CD14-positive monocyte (primary cell): ENCODE measurements at regions of chr9 and their contacts with region 1.

Region 1: DNA sequence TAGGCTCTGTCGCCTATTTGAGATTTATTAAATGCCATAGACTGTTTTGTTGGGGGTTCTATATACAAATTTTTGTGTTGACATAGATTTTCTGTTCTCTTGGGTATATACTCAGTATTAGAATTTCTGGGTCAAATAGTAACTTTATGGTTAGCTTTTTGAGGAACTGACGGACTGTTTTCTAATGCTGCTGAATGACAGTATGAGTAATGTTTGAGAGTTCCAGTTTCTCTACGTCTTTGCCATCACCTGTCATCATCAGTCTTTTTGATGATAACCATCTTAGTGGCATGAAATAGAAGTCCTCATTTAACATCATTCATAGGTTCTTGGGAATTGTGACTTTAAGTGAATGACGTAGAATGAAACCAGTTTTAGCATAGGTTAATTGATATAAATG is 60.1 kb downstream of the CCDC171 start:
- DNase-seq: no peak
- H3K4me3 ChIP-seq: no peak overlapping the region
- H3K4me3 Mint-ChIP-seq: no peak overlapping the region
- H3K27ac ChIP-seq: no peak overlapping the region
- H3K27ac Mint-ChIP-seq: no peak overlapping the region
- H3K4me1 ChIP-seq: no peaks in the 10 kb centered on the region
- H3K4me1 Mint-ChIP-seq: no peaks in the 10 kb centered on the region
- H3K27me3 ChIP-seq: no peaks in the 10 kb centered on the region
- H3K27me3 Mint-ChIP-seq: no peaks in the 10 kb centered on the region
- CTCF ChIP-seq: no peak

Region 2: DNA sequence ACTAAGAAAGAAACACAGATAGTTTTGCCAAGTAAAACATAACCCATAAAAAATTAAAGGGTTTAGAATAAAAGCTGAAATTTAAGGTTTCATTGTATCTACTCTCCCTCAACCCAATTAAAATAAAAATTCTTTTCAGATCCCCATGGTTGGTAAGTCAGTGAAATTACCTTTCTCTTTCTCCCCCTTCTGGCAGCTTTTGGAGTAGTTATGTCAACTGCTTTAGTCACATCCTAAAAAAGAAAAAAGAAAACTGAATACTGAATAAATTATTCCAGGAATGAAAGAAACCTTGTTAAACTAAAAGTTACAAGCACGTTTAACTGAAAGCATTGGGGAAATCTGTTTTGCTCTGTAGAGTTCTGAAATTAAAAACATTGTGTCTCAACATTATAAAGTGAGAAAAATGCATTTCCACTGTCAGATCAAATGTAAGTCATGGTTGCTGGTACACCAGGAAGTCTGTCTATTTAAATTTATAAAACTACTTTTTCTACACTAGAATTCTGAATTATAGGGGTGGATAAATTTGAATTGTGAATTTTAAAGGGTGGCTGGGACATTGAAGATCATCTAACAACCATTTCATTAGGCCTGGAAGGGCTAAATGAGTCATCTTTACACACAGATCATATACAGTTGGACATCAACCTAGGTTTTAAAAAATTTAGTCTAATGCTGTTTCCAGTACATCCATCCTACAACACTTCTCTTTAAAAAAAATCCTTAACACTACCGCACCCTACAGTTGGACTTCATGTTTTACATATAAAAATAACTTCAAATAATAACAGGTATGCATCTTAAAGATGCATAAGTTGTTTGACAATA is 126.9 kb before region 1 on chr9:
- intact Hi-C with region 1: loop called in 1 of 2 experiments (anchors 10 kb)
- DNase-seq: no peak
- H3K4me3 ChIP-seq: no peak overlapping the region
- H3K4me3 Mint-ChIP-seq: no peak overlapping the region
- H3K27ac ChIP-seq: peak overlapping the region in 1 of 2 donors; percentile 18
- H3K27ac Mint-ChIP-seq: peak overlapping the region in 2 of 7 donors; percentile 12 to 23
- H3K4me1 ChIP-seq: no peaks in the 10 kb centered on the region
- H3K4me1 Mint-ChIP-seq: no peaks in the 10 kb centered on the region
- H3K27me3 ChIP-seq: no peaks in the 10 kb centered on the region
- H3K27me3 Mint-ChIP-seq: no peaks in the 10 kb centered on the region
- CTCF ChIP-seq: peak; percentile 58

Region 3: DNA sequence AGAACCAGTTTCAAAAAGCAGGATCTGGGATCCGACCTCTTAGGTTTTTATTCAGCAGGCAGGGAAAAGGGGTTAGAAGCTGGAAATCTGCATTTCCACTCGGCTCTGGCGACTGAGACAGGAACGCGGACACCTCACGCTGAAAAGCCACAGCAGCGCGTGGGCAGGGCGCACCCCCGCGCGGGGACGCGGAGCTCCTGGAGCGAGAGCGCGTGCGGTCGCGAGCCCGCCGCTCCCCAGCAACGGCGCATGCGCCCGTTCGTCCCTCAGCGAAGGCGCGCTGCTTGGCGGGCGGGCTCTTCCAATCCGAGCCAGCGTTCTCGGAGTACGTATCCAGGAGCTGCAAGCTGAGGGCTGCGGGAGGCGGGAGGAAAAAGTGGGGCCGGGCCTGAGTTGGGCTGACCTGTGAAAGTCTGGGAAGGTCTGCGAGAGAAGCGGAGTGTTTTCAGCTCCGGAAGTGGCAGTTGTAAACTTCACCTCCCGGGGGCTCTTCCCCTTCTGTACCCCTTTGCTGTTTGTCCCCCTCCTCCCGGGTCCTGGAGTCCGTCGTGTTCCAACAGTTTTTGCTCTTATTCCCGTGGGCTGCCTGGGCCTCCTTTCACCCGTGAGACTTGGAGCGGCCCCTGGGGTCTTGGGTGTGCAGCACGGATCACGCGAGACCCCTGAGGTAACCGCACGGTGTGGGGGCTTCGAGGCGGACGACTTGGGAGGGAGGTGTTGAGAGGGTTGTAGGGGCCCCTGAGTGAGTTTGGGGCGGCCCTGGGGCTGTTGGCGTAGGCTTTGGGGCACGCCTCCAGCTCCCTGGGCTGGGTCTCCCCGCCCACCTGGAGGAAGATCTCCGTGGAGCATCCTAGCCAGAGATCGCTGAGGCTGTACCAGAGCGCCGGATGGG is 60.1 kb before region 1 on chr9 and contains the start of gene CCDC171:
- intact Hi-C with region 1: loop called in 1 of 2 experiments (anchors 10 kb)
- DNase-seq: peak; percentile 85 to 88 (median 85)
- H3K4me3 ChIP-seq: peak within 1 kb of the TSS; percentile 68 to 87 (median 71)
- H3K4me3 Mint-ChIP-seq: peak within 1 kb of the TSS; percentile 92 to 95
- H3K27ac ChIP-seq: peak within 1 kb of the TSS in 1 of 2 donors; percentile 56
- H3K27ac Mint-ChIP-seq: peak within 1 kb of the TSS in 5 of 7 donors; percentile 53 to 88 (median 62)
- H3K4me1 ChIP-seq: peaks cover 18 to 25% of the 10 kb centered on the region in 2 donors
- H3K4me1 Mint-ChIP-seq: peaks cover 23% of the 10 kb centered on the region
- H3K27me3 ChIP-seq: peaks cover 0 to 4% of the 10 kb centered on the region in 2 donors
- H3K27me3 Mint-ChIP-seq: peaks cover 1 to 13% (median 10%) of the 10 kb centered on the region in 3 donors
- CTCF ChIP-seq: no peak
- polyA plus RNA-seq, gene CCDC171: 0.08 to 0.17 (median 0.10) TPM

Region 4: DNA sequence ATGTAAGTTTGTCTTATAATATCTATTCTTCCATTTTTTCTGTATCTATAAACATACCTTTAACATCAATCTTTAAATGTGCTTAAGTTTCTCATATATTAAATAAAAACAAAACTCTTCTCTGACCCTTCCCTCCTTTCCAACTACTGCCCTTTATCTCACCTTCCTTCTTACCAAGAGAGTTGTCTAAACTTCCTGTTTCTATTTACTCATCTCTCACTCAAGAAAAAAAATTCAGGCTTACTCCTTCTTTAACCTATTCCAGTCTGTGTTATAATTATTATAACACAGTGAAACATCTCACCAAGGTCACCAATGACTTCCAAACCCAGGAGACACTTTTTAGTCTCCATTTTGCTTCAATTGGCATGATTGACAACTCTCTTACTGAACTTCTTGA is 80.7 kb after region 1 on chr9:
- intact Hi-C with region 1: no loop called
- DNase-seq: no peak
- H3K4me3 ChIP-seq: no peak overlapping the region
- H3K4me3 Mint-ChIP-seq: no peak overlapping the region
- H3K27ac ChIP-seq: no peak overlapping the region
- H3K27ac Mint-ChIP-seq: no peak overlapping the region
- H3K4me1 ChIP-seq: no peaks in the 10 kb centered on the region
- H3K4me1 Mint-ChIP-seq: peaks cover 1% of the 10 kb centered on the region
- H3K27me3 ChIP-seq: no peaks in the 10 kb centered on the region
- H3K27me3 Mint-ChIP-seq: peaks cover 0 to 2% (median 0%) of the 10 kb centered on the region in 3 donors
- CTCF ChIP-seq: no peak

Region 5: DNA sequence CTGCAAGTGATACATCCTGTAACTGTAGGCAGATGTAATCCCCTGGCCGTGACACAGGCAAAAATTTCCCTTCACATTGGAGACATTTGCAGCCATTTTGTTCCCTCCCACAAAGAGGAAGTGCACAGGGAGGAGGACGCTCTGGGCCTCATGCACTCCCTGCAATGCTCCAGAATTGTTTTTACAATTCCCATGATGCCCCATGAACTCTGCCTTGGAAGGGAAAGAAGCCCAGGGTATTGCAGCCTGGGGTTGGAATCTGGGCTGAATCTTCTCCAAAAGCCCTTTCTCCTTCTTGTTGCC is 431.6 kb after region 1 on chr9:
- intact Hi-C with region 1: no loop called
- DNase-seq: no peak
- H3K4me3 ChIP-seq: no peak overlapping the region
- H3K4me3 Mint-ChIP-seq: no peak overlapping the region
- H3K27ac ChIP-seq: no peak overlapping the region
- H3K27ac Mint-ChIP-seq: no peak overlapping the region
- H3K4me1 ChIP-seq: no peaks in the 10 kb centered on the region
- H3K4me1 Mint-ChIP-seq: no peaks in the 10 kb centered on the region
- H3K27me3 ChIP-seq: no peaks in the 10 kb centered on the region
- H3K27me3 Mint-ChIP-seq: peaks cover 0 to under 1% (median 0%) of the 10 kb centered on the region in 3 donors
- CTCF ChIP-seq: no peak